ENCODE measurements at regions of chr7 and their contacts with region 1.

Region 1: GRCh38 chr7:142478479-142479072 is 220.7 kb upstream of the PRSS58 start:
- DNase-seq: peak; percentile 53
- ATAC-seq: peak; percentile 32
- H3K4me3 Mint-ChIP-seq: no peak overlapping the region
- H3K27ac Mint-ChIP-seq: no peak overlapping the region
- H3K4me1 Mint-ChIP-seq: peaks cover 56% of the 10 kb centered on the region
- H3K27me3 Mint-ChIP-seq: no peaks in the 10 kb centered on the region

Region 2: GRCh38 chr7:142438235-142438922 is 40.2 kb before region 1 on chr7:
- CTCF ChIA-PET with region 1: interaction called, 11 read pairs
- POLR2A ChIA-PET with region 1: no interaction called
- DNase-seq: peak; percentile 51
- ATAC-seq: no peak
- H3K4me3 Mint-ChIP-seq: no peak overlapping the region
- H3K27ac Mint-ChIP-seq: no peak overlapping the region
- H3K4me1 Mint-ChIP-seq: peaks cover 56% of the 10 kb centered on the region
- H3K27me3 Mint-ChIP-seq: no peaks in the 10 kb centered on the region

Region 3: DNA sequence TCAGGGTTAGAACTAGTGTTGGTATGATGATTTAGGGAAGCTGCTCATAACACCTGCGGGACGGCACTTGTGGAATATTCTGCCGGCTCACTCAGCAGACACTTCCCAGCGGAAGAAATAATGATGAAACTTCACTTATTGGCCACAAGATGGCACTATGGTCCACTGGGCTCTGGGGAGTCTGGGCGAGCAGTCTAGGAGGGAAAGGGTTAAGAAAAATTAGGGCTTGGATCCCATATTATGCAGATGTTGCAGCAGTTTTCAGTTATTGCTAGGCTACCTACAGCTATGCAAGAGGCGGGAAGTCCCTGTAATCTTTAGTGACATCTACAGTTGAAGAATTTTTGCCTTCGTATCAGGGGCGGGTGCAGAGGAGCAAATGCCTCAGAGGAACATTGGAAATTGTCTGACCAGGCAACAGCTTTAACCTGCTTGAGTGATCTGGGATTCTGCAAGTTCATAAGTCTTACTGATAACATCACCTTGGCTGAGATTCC is 18.0 kb after region 1 on chr7:
- CTCF ChIA-PET with region 1: interaction called, 86 read pairs
- POLR2A ChIA-PET with region 1: no interaction called
- DNase-seq: peak; percentile 33
- ATAC-seq: peak; percentile 59
- H3K4me3 Mint-ChIP-seq: peak overlapping the region; percentile 16
- H3K27ac Mint-ChIP-seq: no peak overlapping the region
- H3K4me1 Mint-ChIP-seq: peaks cover 47% of the 10 kb centered on the region
- H3K27me3 Mint-ChIP-seq: peaks cover 3% of the 10 kb centered on the region

Region 4: GRCh38 chr7:142516038-142516501 is 37.5 kb after region 1 on chr7:
- CTCF ChIA-PET with region 1: interaction called, 15 read pairs
- POLR2A ChIA-PET with region 1: no interaction called
- DNase-seq: peak; percentile 56
- ATAC-seq: peak; percentile 79
- H3K4me3 Mint-ChIP-seq: no peak overlapping the region
- H3K27ac Mint-ChIP-seq: no peak overlapping the region
- H3K4me1 Mint-ChIP-seq: peaks cover 31% of the 10 kb centered on the region
- H3K27me3 Mint-ChIP-seq: peaks cover 4% of the 10 kb centered on the region

Region 5: GRCh38 chr7:142603870-142604448 is 125.4 kb after region 1 on chr7:
- CTCF ChIA-PET with region 1: no interaction called
- POLR2A ChIA-PET with region 1: no interaction called
- DNase-seq: peak; percentile 66
- ATAC-seq: peak; percentile 53
- H3K4me3 Mint-ChIP-seq: no peak overlapping the region
- H3K27ac Mint-ChIP-seq: no peak overlapping the region
- H3K4me1 Mint-ChIP-seq: peaks cover under 1% of the 10 kb centered on the region
- H3K27me3 Mint-ChIP-seq: peaks cover 12% of the 10 kb centered on the region